ENCODE measurements at regions of chr11 and their contacts with region 1.

Region 1: GRCh38 chr11:40029391-40029790 is 1430.1 kb downstream of the LRRC4C start:
- DNase-seq: no peak
- ATAC-seq: no peak
- H3K4me3 ChIP-seq: peak overlapping the region; percentile 14 to 33; a peak in 3 of 4 replicates
- H3K27ac ChIP-seq: no peak overlapping the region
- H3K4me1 ChIP-seq: no peaks in the 10 kb centered on the region
- H3K27me3 ChIP-seq: no peaks in the 10 kb centered on the region; the same call in 1 of the 2 replicates
- CTCF ChIP-seq: no peak

Region 2: GRCh38 chr11:39932966-39933365 is 96.4 kb before region 1 on chr11:
- CTCF ChIA-PET with region 1: interaction called, 14 read pairs
- POLR2A ChIA-PET with region 1: no interaction called
- in situ Hi-C with region 1: no loop called
- intact Hi-C with region 1: no loop called
- DNase-seq: no peak
- ATAC-seq: no peak
- H3K4me3 ChIP-seq: no peak overlapping the region
- H3K27ac ChIP-seq: no peak overlapping the region
- H3K4me1 ChIP-seq: no peaks in the 10 kb centered on the region
- H3K27me3 ChIP-seq: no peaks in the 10 kb centered on the region
- CTCF ChIP-seq: no peak

Region 3: DNA sequence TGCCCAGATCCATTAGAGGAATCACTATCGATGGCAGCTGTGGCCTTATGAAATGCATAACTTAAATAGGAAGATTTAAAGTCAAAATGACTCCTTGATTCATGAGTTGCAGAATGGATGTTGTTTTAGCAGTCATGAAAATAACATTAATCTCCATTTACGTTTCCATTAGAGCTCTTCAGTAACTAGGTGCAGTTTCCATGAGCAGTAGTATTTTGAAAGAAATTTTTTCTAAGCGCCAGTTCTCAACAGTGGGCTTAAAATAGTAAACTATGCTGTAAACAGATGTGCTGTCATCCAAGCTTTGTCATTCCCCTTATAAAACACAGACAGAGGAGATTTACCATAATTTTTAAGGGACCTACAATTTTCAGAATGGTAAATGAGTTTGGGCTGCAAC is 15.9 kb after region 1 on chr11:
- CTCF ChIA-PET with region 1: no interaction called
- POLR2A ChIA-PET with region 1: no interaction called
- in situ Hi-C with region 1: no loop called
- intact Hi-C with region 1: no loop called
- DNase-seq: no peak
- ATAC-seq: no peak
- H3K4me3 ChIP-seq: no peak overlapping the region
- H3K27ac ChIP-seq: no peak overlapping the region
- H3K4me1 ChIP-seq: no peaks in the 10 kb centered on the region
- H3K27me3 ChIP-seq: no peaks in the 10 kb centered on the region
- CTCF ChIP-seq: no peak

Measured in Panc1 (cell line).